GM12878 (cell line): ENCODE measurements at regions of chr1 and their contacts with region 1.

Region 1: GRCh38 chr1:226687426-226687825 is 51.7 kb downstream of the ITPKB start:
- DNase-seq: no peak
- ATAC-seq: peak; percentile 63
- H3K4me3 ChIP-seq: no peak overlapping the region
- H3K27ac ChIP-seq: no peak overlapping the region
- H3K4me1 ChIP-seq: peaks cover 26% of the 10 kb centered on the region
- H3K27me3 ChIP-seq: no peaks in the 10 kb centered on the region
- CTCF ChIP-seq: peak; percentile 11 to 36 (median 35); a peak in 4 of 6 replicates
- EP300 ChIP-seq: no peak
- POLR2A ChIP-seq: no peak
- RAD21 ChIP-seq: peak; percentile 43

Region 2: GRCh38 chr1:226626577-226626956 is 60.9 kb before region 1 on chr1:
- CTCF ChIA-PET with region 1: interaction called, 11 read pairs
- POLR2A ChIA-PET with region 1: no interaction called
- RAD21 ChIA-PET with region 1: interaction called, 7 read pairs
- SMC1A ChIA-PET with region 1: no interaction called
- in situ Hi-C with region 1: no loop called
- intact Hi-C with region 1: no loop called
- DNase-seq: peak; percentile 27
- ATAC-seq: peak; percentile 93
- H3K4me3 ChIP-seq: no peak overlapping the region
- H3K27ac ChIP-seq: no peak overlapping the region
- H3K4me1 ChIP-seq: peaks cover 6% of the 10 kb centered on the region
- H3K27me3 ChIP-seq: no peaks in the 10 kb centered on the region
- CTCF ChIP-seq: peak; percentile 79 to 97 (median 97)
- EP300 ChIP-seq: no peak
- POLR2A ChIP-seq: no peak
- RAD21 ChIP-seq: peak; percentile 82

Region 3: DNA sequence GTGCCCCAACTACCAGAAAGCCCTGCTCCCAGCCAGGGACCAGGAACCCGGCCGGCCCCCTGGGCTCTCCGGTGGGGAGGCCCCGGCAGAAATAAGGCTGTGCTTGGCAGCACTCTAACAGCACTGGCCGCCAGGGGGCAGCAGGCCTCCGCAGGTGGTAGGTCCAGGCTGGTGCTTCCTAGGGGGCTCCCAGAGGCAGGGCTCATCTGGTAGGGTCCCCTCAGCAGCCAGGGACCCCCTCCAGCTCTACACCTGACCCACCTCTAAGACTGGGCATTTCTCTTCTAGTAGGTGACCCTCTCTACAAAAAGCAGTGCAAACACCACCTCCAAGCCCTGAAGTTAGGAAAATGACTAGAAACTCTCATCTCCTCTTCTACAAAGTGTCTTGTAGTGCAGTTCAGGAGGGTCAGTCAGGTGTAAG is 53.2 kb before region 1 on chr1:
- CTCF ChIA-PET with region 1: interaction called, 40 read pairs
- POLR2A ChIA-PET with region 1: interaction called, 5 read pairs
- RAD21 ChIA-PET with region 1: interaction called, 3 read pairs
- SMC1A ChIA-PET with region 1: interaction called, 20 read pairs
- in situ Hi-C with region 1: no loop called
- intact Hi-C with region 1: no loop called
- DNase-seq: no peak
- ATAC-seq: peak; percentile 97
- H3K4me3 ChIP-seq: no peak overlapping the region
- H3K27ac ChIP-seq: no peak overlapping the region
- H3K4me1 ChIP-seq: peaks cover 21% of the 10 kb centered on the region
- H3K27me3 ChIP-seq: no peaks in the 10 kb centered on the region
- CTCF ChIP-seq: peak; percentile 85 to 96 (median 95)
- EP300 ChIP-seq: no peak
- POLR2A ChIP-seq: no peak
- RAD21 ChIP-seq: peak; percentile 94

Region 4: DNA sequence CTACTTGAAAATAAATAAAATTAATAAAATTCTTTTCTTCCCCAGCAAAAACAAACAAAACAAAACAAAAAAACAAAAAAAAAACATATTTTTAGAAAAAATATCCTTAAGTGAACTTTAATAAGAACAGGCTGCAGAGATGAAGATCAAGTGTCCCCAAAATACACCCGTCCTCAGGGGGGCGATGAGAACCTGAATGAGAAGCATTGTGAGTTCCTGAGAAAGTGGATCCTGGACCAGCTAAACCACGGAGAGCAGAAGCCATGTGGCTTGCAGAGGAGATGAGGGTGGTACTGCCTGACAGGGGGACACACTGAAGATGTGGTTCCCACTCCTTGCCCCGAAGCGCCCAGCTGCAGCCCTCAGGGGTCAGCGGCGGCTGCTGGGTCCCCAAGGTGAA is 37.6 kb before region 1 on chr1:
- CTCF ChIA-PET with region 1: interaction called, 11 read pairs
- POLR2A ChIA-PET with region 1: interaction called, 4 read pairs
- RAD21 ChIA-PET with region 1: interaction called, 8 read pairs
- SMC1A ChIA-PET with region 1: interaction called, 13 read pairs
- in situ Hi-C with region 1: no loop called
- intact Hi-C with region 1: no loop called
- DNase-seq: no peak
- ATAC-seq: no peak
- H3K4me3 ChIP-seq: no peak overlapping the region
- H3K27ac ChIP-seq: no peak overlapping the region
- H3K4me1 ChIP-seq: peaks cover 22% of the 10 kb centered on the region
- H3K27me3 ChIP-seq: no peaks in the 10 kb centered on the region
- CTCF ChIP-seq: peak; percentile 16 to 38 (median 36); a peak in 3 of 6 replicates
- EP300 ChIP-seq: no peak
- POLR2A ChIP-seq: no peak
- RAD21 ChIP-seq: peak; percentile 56

Region 5: GRCh38 chr1:226662642-226663326 is 24.6 kb before region 1 on chr1:
- CTCF ChIA-PET with region 1: no interaction called
- POLR2A ChIA-PET with region 1: interaction called, 5 read pairs
- RAD21 ChIA-PET with region 1: interaction called, 15 read pairs
- SMC1A ChIA-PET with region 1: interaction called, 8 read pairs
- in situ Hi-C with region 1: no loop called
- intact Hi-C with region 1: no loop called
- DNase-seq: peak; percentile 99
- ATAC-seq: peak; percentile 95
- H3K4me3 ChIP-seq: peak overlapping the region; percentile 5; the same call in 1 of the 2 replicates
- H3K27ac ChIP-seq: peak overlapping the region; percentile 48
- H3K4me1 ChIP-seq: peaks cover 57% of the 10 kb centered on the region
- H3K27me3 ChIP-seq: no peaks in the 10 kb centered on the region
- CTCF ChIP-seq: no peak
- EP300 ChIP-seq: peak; percentile 98
- POLR2A ChIP-seq: no peak
- RAD21 ChIP-seq: peak; percentile 14; the same call in 1 of the 2 replicates